Vagina (tissue), 2 donors: ENCODE measurements at regions of chr2 and their contacts with region 1.

Region 1: GRCh38 chr2:62410015-62410453 is 96.0 kb downstream of the TMEM17 start:
- DNase-seq: no peak
- H3K4me3 ChIP-seq: no peak overlapping the region
- H3K27ac ChIP-seq: peak overlapping the region; percentile 82
- H3K4me1 ChIP-seq: peaks cover 26% of the 10 kb centered on the region
- H3K27me3 ChIP-seq: no peaks in the 10 kb centered on the region
- CTCF ChIP-seq: no peak
- POLR2A ChIP-seq: no peak

Region 2: DNA sequence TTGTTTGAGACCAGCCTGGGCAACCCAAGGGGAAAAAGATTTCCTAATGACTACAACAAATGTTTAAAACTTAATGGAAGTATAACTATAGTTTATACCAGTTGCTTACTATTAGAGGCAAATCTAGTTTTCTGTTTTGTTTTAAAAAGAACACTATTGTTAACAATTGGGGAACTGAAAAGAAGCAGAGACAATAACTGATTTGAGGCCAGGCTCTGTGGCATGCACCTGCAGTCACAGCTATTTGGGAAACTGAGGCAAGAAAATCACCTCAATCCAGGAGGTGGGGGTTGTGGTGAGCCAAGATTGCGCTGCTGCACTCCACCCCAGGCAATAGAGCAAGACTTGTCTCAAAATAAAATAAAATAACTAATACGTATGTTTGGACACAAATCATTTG is 911.0 kb before region 1 on chr2:
- intact Hi-C with region 1: no loop called
- DNase-seq: no peak
- H3K4me3 ChIP-seq: no peak overlapping the region
- H3K27ac ChIP-seq: no peak overlapping the region
- H3K4me1 ChIP-seq: no peaks in the 10 kb centered on the region
- H3K27me3 ChIP-seq: no peaks in the 10 kb centered on the region
- CTCF ChIP-seq: no peak
- POLR2A ChIP-seq: no peak

Region 3: DNA sequence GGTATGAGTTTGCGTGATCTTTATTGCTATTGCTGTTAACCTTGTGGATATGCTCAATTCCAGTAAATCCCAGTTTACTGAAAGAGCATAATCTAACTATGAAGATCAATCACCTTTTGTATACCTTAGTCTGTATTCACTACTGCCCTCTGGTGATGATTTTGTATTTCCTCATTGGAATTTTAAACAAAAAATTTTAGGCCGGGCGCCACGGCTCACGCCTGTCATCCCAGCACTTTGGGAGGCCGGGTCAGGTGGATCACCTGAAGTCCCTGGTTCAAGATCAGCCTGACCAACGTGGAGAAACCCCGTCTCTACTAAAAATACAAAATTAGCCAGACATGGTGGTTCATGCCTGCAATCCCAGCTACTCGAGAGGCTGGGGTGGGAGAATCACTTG is 499.4 kb before region 1 on chr2:
- intact Hi-C with region 1: loop called (anchors 5 kb)
- DNase-seq: no peak
- H3K4me3 ChIP-seq: no peak overlapping the region
- H3K27ac ChIP-seq: no peak overlapping the region
- H3K4me1 ChIP-seq: peaks cover 14% of the 10 kb centered on the region
- H3K27me3 ChIP-seq: no peaks in the 10 kb centered on the region
- CTCF ChIP-seq: no peak
- POLR2A ChIP-seq: no peak

Region 4: GRCh38 chr2:61993444-61994024 is 416.5 kb before region 1 on chr2:
- intact Hi-C with region 1: loop called (anchors 10 kb)
- DNase-seq: no peak
- H3K4me3 ChIP-seq: no peak overlapping the region
- H3K27ac ChIP-seq: no peak overlapping the region
- H3K4me1 ChIP-seq: no peaks in the 10 kb centered on the region
- H3K27me3 ChIP-seq: no peaks in the 10 kb centered on the region
- CTCF ChIP-seq: peak in 2 of 3 experiments; percentile 20 to 51
- POLR2A ChIP-seq: no peak